CD4-positive, alpha-beta T cell (primary cell): ENCODE measurements at regions of chr2 and their contacts with region 1.

Region 1: GRCh38 chr2:155368934-155369333 is 670.4 kb downstream of the KCNJ3 start:
- DNase-seq: peak in 2 of 14 experiments; percentile 5 to 8
- ATAC-seq: no peak
- H3K4me3 ChIP-seq: no peak overlapping the region
- H3K4me3 Mint-ChIP-seq: no peak overlapping the region
- H3K27ac ChIP-seq: no peak overlapping the region
- H3K27ac Mint-ChIP-seq: no peak overlapping the region
- H3K4me1 ChIP-seq: no peaks in the 10 kb centered on the region
- H3K4me1 Mint-ChIP-seq: no peaks in the 10 kb centered on the region
- H3K27me3 ChIP-seq: no peaks in the 10 kb centered on the region
- H3K27me3 Mint-ChIP-seq: no peaks in the 10 kb centered on the region
- CTCF ChIP-seq: peak; percentile 25

Region 2: DNA sequence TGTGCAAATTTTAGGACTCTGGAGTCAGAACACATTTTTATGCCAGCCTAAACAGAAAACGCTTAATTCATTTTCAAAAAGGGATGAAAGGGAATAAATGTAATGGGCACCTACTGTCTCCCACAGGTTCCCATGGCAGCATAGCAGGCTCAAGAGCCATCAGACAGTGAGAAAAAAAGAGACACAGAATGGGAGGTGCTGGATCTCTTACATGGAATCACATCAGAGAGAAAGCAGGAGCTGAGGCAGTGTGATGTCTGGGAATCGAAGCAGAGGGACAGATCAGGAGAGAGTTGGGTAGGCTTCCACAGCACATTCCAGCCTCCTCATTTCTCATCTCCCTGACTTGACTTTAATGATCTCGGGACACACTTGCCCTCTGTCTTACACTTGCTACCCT is 13.8 kb after region 1 on chr2:
- CTCF ChIA-PET with region 1: no interaction called
- POLR2A ChIA-PET with region 1: no interaction called
- intact Hi-C with region 1: no loop called
- DNase-seq: no peak
- ATAC-seq: no peak
- H3K4me3 ChIP-seq: no peak overlapping the region
- H3K4me3 Mint-ChIP-seq: no peak overlapping the region
- H3K27ac ChIP-seq: no peak overlapping the region
- H3K27ac Mint-ChIP-seq: no peak overlapping the region
- H3K4me1 ChIP-seq: no peaks in the 10 kb centered on the region
- H3K4me1 Mint-ChIP-seq: no peaks in the 10 kb centered on the region
- H3K27me3 ChIP-seq: no peaks in the 10 kb centered on the region
- H3K27me3 Mint-ChIP-seq: no peaks in the 10 kb centered on the region
- CTCF ChIP-seq: no peak

Region 3: GRCh38 chr2:156589381-156590079 is 1220.6 kb after region 1 on chr2:
- CTCF ChIA-PET with region 1: no interaction called
- POLR2A ChIA-PET with region 1: no interaction called
- intact Hi-C with region 1: loop called (anchors 2 to 5 kb)
- DNase-seq: peak in 7 of 14 experiments; percentile 0 to 65 (median 19)
- ATAC-seq: peak; percentile 58
- H3K4me3 ChIP-seq: no peak overlapping the region
- H3K4me3 Mint-ChIP-seq: no peak overlapping the region
- H3K27ac ChIP-seq: no peak overlapping the region
- H3K27ac Mint-ChIP-seq: no peak overlapping the region
- H3K4me1 ChIP-seq: no peaks in the 10 kb centered on the region
- H3K4me1 Mint-ChIP-seq: peaks cover 5% of the 10 kb centered on the region
- H3K27me3 ChIP-seq: no peaks in the 10 kb centered on the region
- H3K27me3 Mint-ChIP-seq: no peaks in the 10 kb centered on the region
- CTCF ChIP-seq: peak; percentile 78

Region 4: DNA sequence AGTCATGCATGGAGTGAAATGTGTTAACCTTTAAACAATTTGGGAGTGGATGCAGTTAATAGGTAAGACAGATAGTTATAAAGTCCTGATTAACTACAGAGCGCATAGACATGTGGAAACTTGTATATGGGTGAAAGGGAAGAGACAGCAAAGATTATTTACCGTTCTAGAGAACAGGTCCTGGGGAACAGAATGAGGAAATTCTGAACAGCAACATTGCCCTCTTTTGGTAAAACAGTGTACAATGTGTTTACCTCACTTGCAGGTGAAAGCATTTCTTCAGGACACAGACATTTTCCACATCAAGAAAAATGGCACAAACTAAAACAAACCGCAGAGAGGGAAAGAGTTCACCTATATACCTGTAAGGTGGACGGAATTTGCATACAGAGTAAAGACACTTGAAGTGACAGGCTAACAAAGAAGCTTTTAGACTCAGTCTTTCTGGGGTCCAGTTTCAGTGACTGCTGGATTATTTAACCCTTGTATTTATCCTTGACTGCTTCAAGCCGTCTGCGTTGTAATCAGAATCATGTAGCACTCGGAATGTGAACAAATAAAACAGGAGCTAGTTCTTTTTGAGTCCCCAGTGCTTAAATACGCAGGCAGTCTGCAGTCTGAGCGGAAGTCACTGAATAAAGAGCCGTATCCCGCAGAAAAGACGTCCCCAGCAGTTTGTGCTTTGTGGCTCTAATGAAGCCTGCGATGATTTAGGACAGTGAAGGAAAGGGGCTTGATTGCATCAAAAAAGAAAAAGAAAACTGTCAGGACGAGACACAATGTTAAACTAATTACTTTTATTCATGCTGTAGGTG is 1523.7 kb after region 1 on chr2:
- CTCF ChIA-PET with region 1: no interaction called
- POLR2A ChIA-PET with region 1: no interaction called
- intact Hi-C with region 1: loop called in 1 of 2 experiments (anchors 5 kb)
- DNase-seq: peak in 3 of 14 experiments; percentile 18 to 28 (median 19)
- ATAC-seq: peak; percentile 39
- H3K4me3 ChIP-seq: no peak overlapping the region
- H3K4me3 Mint-ChIP-seq: no peak overlapping the region
- H3K27ac ChIP-seq: no peak overlapping the region
- H3K27ac Mint-ChIP-seq: no peak overlapping the region
- H3K4me1 ChIP-seq: no peaks in the 10 kb centered on the region
- H3K4me1 Mint-ChIP-seq: peaks cover 18% of the 10 kb centered on the region
- H3K27me3 ChIP-seq: peaks cover 2 to 33% of the 10 kb centered on the region in 2 experiments
- H3K27me3 Mint-ChIP-seq: peaks cover 52% of the 10 kb centered on the region
- CTCF ChIP-seq: no peak

Region 5: GRCh38 chr2:157194097-157194688 is 1825.3 kb after region 1 on chr2:
- CTCF ChIA-PET with region 1: no interaction called
- POLR2A ChIA-PET with region 1: no interaction called
- intact Hi-C with region 1: loop called in 1 of 2 experiments (anchors 2 kb)
- DNase-seq: peak in 4 of 14 experiments; percentile 4 to 53 (median 40)
- ATAC-seq: peak; percentile 48
- H3K4me3 ChIP-seq: no peak overlapping the region
- H3K4me3 Mint-ChIP-seq: no peak overlapping the region
- H3K27ac ChIP-seq: no peak overlapping the region
- H3K27ac Mint-ChIP-seq: no peak overlapping the region
- H3K4me1 ChIP-seq: no peaks in the 10 kb centered on the region
- H3K4me1 Mint-ChIP-seq: no peaks in the 10 kb centered on the region
- H3K27me3 ChIP-seq: no peaks in the 10 kb centered on the region
- H3K27me3 Mint-ChIP-seq: no peaks in the 10 kb centered on the region
- CTCF ChIP-seq: peak; percentile 65